ENCODE measurements at regions of chr6 and their contacts with region 1.

Region 1: GRCh38 chr6:137933696-137934095 is 66.6 kb downstream of the TNFAIP3 start:
- DNase-seq: no peak
- ATAC-seq: no peak
- H3K4me3 ChIP-seq: no peak overlapping the region
- H3K27ac ChIP-seq: no peak overlapping the region
- H3K4me1 ChIP-seq: peaks cover 0 to 7% of the 10 kb centered on the region in 2 experiments; a peak in 1 of 4 replicates
- H3K27me3 ChIP-seq: no peaks in the 10 kb centered on the region
- CTCF ChIP-seq: no peak
- POLR2A ChIP-seq: no peak
- RAD21 ChIP-seq: no peak

Region 2: DNA sequence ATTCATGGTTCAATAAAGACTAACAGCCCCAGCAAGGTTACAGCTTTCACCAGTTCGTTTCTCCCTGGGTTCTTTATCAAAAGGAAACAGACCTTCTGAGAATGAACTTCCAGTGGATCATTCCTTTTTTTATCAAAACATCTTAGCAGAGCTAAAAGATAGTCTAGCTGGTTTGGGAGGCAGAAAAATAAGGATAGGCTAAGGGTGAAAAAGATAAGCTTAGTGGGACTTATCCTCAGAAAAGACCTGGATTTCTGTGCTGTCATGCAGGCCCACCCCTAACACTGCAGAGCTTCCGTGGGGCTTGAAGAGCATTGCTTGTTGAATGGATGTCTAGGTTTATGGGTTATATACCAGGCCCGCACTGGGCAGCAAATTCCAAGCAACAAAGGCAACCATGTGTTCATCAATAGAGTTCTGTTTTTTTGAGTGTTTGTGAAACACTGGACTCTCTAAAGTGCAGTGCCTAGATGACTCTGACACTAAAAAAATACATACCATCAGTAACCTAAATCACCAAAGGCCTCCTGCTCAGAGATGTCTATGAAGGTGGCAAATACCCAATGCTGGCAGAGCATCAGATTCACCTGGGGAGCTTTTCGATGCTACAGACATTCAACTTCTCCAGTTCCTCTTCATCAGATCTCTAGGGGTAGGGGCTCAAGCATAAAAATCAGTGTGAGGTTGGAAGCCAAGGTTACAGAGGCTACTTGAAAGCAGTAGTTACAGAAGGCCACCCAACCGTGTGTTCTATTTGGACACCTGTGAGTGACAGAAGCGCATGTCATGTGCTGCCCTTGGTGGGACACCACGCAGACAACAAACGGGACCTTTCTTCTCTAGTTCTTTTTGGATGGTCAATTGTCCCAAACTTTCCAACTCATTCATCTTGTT is 13.6 kb before region 1 on chr6:
- CTCF ChIA-PET with region 1: no interaction called
- POLR2A ChIA-PET with region 1: no interaction called
- RAD21 ChIA-PET with region 1: no interaction called
- intact Hi-C with region 1: no loop called
- DNase-seq: no peak
- ATAC-seq: no peak
- H3K4me3 ChIP-seq: no peak overlapping the region
- H3K27ac ChIP-seq: no peak overlapping the region
- H3K4me1 ChIP-seq: no peaks in the 10 kb centered on the region
- H3K27me3 ChIP-seq: no peaks in the 10 kb centered on the region
- CTCF ChIP-seq: no peak
- POLR2A ChIP-seq: no peak
- RAD21 ChIP-seq: no peak

Region 3: DNA sequence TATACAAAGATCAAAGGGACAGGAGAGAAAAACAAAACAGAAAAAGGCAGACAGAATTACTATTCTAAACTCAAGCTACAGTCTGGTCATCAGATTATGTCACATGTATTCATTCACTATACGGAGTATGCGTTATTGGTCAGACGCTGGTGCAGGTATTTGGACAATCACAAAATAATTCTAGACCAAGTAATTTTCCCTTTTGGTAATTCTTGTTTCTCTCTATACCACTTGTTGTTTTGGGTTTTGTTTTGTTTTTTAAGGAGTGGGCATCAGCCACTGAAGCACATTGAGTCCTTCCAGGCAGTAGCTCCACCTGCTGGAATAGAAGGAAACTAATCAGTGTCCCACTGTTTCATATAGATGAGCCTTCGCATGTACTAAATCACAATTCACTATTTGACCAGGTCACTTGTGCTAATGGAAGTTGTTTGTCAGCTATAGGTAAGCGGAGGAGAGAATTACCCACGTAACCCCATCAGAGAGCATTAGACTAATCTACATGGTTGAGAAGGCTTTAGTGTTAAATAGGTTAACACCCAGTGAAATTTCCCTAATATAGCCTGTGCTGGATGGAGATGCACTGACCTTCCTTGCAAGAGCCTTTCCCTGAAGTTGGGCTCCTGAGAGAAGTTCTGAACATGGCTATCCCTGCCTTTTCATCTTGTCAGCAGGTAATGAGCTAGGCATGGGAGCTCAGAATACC is 11.2 kb after region 1 on chr6:
- CTCF ChIA-PET with region 1: interaction called, 14 read pairs
- POLR2A ChIA-PET with region 1: no interaction called
- RAD21 ChIA-PET with region 1: no interaction called
- intact Hi-C with region 1: no loop called
- DNase-seq: peak; percentile 19
- ATAC-seq: peak; percentile 95
- H3K4me3 ChIP-seq: no peak overlapping the region
- H3K27ac ChIP-seq: no peak overlapping the region
- H3K4me1 ChIP-seq: no peaks in the 10 kb centered on the region
- H3K27me3 ChIP-seq: no peaks in the 10 kb centered on the region
- CTCF ChIP-seq: peak; percentile 75 to 79 (median 78)
- POLR2A ChIP-seq: no peak
- RAD21 ChIP-seq: peak; percentile 77